Psoas muscle (tissue), 8 donors: ENCODE measurements at regions of chr2 and their contacts with region 1.

Region 1: DNA sequence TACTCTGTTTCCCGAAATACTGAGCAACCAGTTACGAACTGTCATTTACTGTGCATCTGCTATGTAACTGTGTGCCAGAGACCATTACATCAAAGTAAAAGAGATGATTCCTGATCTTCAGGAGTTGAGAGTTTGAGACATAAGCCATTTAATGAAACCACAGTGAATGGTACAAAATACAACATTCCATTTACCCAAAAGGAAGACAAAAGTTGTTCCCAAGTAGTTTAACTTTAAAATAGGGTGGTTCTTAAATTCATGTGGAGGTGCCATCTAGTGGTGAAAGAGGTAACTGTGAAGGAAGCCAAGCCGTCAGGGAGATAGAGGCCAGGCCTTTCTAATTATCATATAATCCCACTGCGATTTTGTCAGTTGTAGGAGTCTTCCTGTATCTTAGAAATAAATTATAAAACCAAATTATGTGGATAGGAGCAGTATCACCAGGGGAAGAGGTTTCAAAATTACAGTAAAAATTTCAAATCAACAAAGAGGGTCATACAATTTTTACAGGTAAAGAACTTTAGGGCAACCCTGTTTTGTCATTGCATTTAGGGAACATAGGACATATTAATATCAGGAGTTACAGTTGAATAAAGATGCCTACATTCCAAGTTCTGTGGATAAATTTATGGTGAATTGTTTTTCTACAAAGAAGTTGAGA is 67.7 kb downstream of the EPAS1 start:
- DNase-seq: no peak
- ATAC-seq: peak; percentile 56 to 80 (median 60)
- H3K4me3 ChIP-seq: no peak overlapping the region
- H3K27ac ChIP-seq: no peak overlapping the region
- H3K4me1 ChIP-seq: peaks cover 14% of the 10 kb centered on the region
- H3K27me3 ChIP-seq: no peaks in the 10 kb centered on the region
- CTCF ChIP-seq: peak; percentile 89

Region 2: GRCh38 chr2:45993476-45993991 is 371.4 kb before region 1 on chr2:
- intact Hi-C with region 1: loop called in 1 of 2 experiments (anchors 5 kb)
- DNase-seq: peak in 1 of 2 donors; percentile 29
- ATAC-seq: peak; percentile 54 to 81 (median 62)
- H3K4me3 ChIP-seq: no peak overlapping the region
- H3K27ac ChIP-seq: no peak overlapping the region
- H3K4me1 ChIP-seq: peaks cover 4% of the 10 kb centered on the region
- H3K27me3 ChIP-seq: no peaks in the 10 kb centered on the region
- CTCF ChIP-seq: peak; percentile 78

Region 3: GRCh38 chr2:46010925-46011490 is 353.9 kb before region 1 on chr2:
- intact Hi-C with region 1: loop called (anchors 5 to 10 kb)
- DNase-seq: no peak
- ATAC-seq: peak in 1 of 4 donors; percentile 64
- H3K4me3 ChIP-seq: no peak overlapping the region
- H3K27ac ChIP-seq: no peak overlapping the region
- H3K4me1 ChIP-seq: no peaks in the 10 kb centered on the region
- H3K27me3 ChIP-seq: no peaks in the 10 kb centered on the region
- CTCF ChIP-seq: peak; percentile 65

Region 4: DNA sequence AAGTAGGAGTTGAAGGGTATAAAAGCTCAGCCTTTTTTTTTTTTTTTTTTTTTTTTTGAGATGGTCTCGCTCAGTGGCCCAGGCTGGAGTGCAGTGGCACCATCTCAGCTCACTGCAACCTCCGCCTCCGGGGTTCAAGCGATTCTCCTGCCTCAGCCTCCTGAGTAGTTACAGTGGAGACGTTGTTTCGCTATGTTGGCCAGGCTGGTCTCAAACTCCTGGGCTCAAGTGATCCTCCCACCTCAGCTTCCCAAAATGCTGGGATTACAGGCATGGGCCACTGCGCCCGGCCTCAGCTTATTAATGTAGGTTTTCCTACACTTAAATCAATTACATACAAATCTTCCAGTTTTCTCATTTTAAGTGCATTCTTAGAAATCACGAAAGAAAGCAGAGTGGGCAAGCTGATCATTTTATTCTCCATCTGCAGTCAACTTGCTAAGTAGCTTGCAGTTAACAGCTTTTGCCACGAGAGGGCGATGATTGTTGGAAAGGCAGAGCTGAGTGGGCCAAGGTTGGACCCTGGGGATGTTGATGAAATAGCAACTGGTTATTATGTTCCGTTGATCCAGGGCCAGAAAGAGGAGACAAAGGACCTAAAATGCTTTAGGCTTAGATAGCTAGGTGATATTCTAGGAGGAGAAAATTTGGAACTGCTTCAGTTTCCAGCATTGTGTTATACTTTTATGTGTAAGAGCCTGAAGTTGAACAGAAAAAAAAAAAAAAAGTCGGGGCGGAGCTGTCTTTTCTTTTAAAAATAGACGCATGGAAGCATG is 302.1 kb before region 1 on chr2:
- intact Hi-C with region 1: loop called in 1 of 2 experiments (anchors 5 kb)
- DNase-seq: peak; percentile 74 to 79
- ATAC-seq: peak; percentile 58 to 91 (median 76)
- H3K4me3 ChIP-seq: no peak overlapping the region
- H3K27ac ChIP-seq: no peak overlapping the region
- H3K4me1 ChIP-seq: no peaks in the 10 kb centered on the region
- H3K27me3 ChIP-seq: no peaks in the 10 kb centered on the region
- CTCF ChIP-seq: peak; percentile 88

Region 5: DNA sequence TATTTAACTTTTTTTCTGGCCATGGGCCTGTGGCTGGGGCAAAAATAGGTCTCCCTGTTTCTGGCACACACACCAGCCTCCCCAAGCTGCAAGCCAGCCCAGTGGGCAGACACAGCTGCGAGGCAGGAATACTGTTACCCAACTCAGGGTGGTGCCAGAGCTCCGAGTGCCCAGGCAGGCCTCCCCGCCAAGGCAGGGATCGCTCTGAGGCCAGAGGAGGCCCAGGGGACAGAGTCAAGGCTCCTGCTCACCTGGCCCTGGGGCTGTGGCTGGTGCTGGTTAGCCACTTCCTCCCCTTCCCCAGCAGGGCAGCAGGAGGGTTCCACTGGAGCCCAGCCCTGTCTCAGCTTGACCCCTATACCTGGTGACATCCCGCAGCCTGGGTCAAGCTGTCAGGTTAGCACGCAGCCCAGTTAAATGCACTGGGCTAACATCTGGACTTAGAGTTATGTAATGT is 134.8 kb before region 1 on chr2:
- intact Hi-C with region 1: loop called (anchors 2 to 5 kb)
- DNase-seq: peak; percentile 38 to 77
- ATAC-seq: peak; percentile 91 to 99 (median 96)
- H3K4me3 ChIP-seq: no peak overlapping the region
- H3K27ac ChIP-seq: no peak overlapping the region
- H3K4me1 ChIP-seq: peaks cover 12% of the 10 kb centered on the region
- H3K27me3 ChIP-seq: no peaks in the 10 kb centered on the region
- CTCF ChIP-seq: peak; percentile 54

Region 6: DNA sequence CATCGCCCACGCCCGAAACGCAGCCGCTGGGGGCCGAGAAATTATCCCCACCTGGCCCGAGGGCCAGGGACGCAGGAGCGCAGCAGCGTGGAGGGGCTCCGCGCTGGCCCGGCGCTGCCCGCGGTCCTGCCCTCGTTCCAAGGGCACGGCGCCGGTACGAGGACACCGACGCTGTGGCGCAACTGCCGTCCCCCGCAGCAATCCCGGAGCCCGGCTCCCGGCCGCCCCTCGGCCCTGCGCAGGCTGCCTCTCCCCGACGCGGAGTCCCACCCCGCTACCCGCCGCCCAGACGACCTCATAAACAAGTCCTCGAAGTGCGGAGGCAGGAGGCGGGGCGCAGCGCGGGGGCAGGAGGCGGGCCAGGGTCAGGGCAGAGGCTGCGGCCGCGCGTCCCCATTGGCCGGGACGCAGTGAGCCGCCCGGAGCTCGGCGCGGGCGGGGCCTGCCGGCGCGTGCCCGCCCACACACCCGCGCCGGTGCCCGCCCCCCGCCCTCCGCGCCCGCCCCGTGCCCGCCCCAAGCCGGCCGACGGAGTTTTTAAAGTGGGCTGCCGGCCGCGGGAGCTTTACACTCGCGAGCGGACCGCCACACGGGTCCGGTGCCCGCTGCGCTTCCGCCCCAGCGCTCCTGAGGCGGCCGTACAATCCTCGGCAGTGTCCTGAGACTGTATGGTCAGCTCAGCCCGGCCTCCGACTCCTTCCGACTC is 67.9 kb before region 1 on chr2 and contains the start of gene EPAS1:
- intact Hi-C with region 1: loop called (anchors 5 kb)
- DNase-seq: peak; percentile 96 to 97
- ATAC-seq: peak; percentile 85 to 92 (median 90)
- H3K4me3 ChIP-seq: peak within 1 kb of the TSS; percentile 83
- H3K27ac ChIP-seq: peak within 1 kb of the TSS; percentile 90
- H3K4me1 ChIP-seq: no peaks in the 10 kb centered on the region
- H3K27me3 ChIP-seq: no peaks in the 10 kb centered on the region
- CTCF ChIP-seq: no peak
- total RNA-seq, gene EPAS1: 44.3 to 123 (median 98.3) TPM